ENCODE measurements at regions of chr6 and their contacts with region 1.

Region 1: GRCh38 chr6:12289933-12290820 is at the start of gene EDN1:
- DNase-seq: peak; percentile 86
- H3K4me3 Mint-ChIP-seq: peak within 1 kb of the TSS; percentile 75
- H3K27ac Mint-ChIP-seq: peak within 1 kb of the TSS; percentile 94
- H3K4me1 Mint-ChIP-seq: peaks cover 55% of the 10 kb centered on the region
- H3K27me3 Mint-ChIP-seq: no peaks in the 10 kb centered on the region
- CTCF ChIP-seq: peak; percentile 39
- total RNA-seq, gene EDN1: 1.2 and 2.7 TPM in 2 replicates

Region 2: DNA sequence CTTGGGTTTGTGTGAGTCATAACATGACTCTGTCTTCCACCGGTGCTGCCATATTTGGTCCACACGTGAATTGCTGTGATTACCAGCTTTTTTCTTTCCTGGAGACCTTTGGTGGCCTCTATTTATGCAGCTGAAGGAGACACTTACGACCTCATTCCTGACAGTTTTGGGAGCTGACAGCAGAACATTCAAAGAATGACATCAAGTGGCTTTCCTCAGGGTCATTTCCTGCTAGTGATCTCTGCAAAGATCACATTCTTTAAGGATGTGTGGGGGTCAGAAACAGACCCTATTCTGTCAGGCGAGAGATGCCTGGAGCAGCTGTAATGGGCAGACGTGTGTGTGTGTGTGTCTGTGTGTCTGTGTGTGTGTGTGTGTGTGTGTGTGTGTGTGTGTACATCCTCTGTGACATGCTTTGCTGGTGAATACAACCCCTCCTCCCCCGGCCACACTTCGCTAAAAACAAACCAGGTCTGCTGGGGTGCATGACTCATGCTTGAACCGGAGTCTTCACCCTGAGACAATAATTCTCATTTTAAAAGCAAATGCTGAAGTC is 637.1 kb before region 1 on chr6:
- CTCF ChIA-PET with region 1: interaction called, 26 read pairs
- POLR2A ChIA-PET with region 1: interaction called, 8 read pairs
- intact Hi-C with region 1: loop called (anchors 1 kb)
- DNase-seq: peak; percentile 59
- H3K4me3 Mint-ChIP-seq: no peak overlapping the region
- H3K27ac Mint-ChIP-seq: no peak overlapping the region
- H3K4me1 Mint-ChIP-seq: no peaks in the 10 kb centered on the region
- H3K27me3 Mint-ChIP-seq: no peaks in the 10 kb centered on the region
- CTCF ChIP-seq: no peak

Region 3: GRCh38 chr6:12228447-12229146 is 61.6 kb before region 1 on chr6:
- CTCF ChIA-PET with region 1: interaction called, 42 read pairs
- POLR2A ChIA-PET with region 1: interaction called, 11 read pairs
- intact Hi-C with region 1: no loop called
- DNase-seq: no peak
- H3K4me3 Mint-ChIP-seq: no peak overlapping the region
- H3K27ac Mint-ChIP-seq: no peak overlapping the region
- H3K4me1 Mint-ChIP-seq: no peaks in the 10 kb centered on the region
- H3K27me3 Mint-ChIP-seq: no peaks in the 10 kb centered on the region
- CTCF ChIP-seq: no peak

Region 4: GRCh38 chr6:12313992-12314805 is 24.0 kb after region 1 on chr6:
- CTCF ChIA-PET with region 1: interaction called, 50 read pairs
- POLR2A ChIA-PET with region 1: interaction called, 371 read pairs
- intact Hi-C with region 1: loop called (anchors 2 kb)
- DNase-seq: peak; percentile 95
- H3K4me3 Mint-ChIP-seq: peak overlapping the region; percentile 62
- H3K27ac Mint-ChIP-seq: peak overlapping the region; percentile 88
- H3K4me1 Mint-ChIP-seq: peaks cover 39% of the 10 kb centered on the region
- H3K27me3 Mint-ChIP-seq: no peaks in the 10 kb centered on the region
- CTCF ChIP-seq: no peak

Region 5: DNA sequence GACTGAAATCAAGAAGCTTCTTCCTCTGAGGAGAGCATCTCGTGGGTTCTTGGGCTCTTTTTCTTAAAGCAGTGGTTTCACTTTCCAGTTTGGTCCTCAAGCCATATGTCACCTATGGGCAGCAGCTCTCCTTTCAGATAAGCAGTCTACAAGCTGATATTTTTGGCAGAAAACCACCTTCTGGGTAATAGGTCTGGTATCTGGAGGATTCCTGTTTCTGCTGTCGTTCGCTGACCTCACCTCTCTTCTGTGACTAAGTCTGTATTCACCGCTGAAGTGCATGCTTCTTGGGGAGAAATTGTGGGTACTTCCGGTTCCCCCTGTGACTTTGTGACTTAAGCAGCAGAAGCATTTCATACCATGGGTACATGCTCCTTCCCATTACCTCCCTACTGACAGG is 193.5 kb after region 1 on chr6:
- CTCF ChIA-PET with region 1: interaction called, 14 read pairs
- POLR2A ChIA-PET with region 1: interaction called, 19 read pairs
- intact Hi-C with region 1: no loop called
- DNase-seq: peak; percentile 76
- H3K4me3 Mint-ChIP-seq: peak overlapping the region; percentile 35
- H3K27ac Mint-ChIP-seq: peak overlapping the region; percentile 47
- H3K4me1 Mint-ChIP-seq: peaks cover 25% of the 10 kb centered on the region
- H3K27me3 Mint-ChIP-seq: no peaks in the 10 kb centered on the region
- CTCF ChIP-seq: no peak

Region 6: DNA sequence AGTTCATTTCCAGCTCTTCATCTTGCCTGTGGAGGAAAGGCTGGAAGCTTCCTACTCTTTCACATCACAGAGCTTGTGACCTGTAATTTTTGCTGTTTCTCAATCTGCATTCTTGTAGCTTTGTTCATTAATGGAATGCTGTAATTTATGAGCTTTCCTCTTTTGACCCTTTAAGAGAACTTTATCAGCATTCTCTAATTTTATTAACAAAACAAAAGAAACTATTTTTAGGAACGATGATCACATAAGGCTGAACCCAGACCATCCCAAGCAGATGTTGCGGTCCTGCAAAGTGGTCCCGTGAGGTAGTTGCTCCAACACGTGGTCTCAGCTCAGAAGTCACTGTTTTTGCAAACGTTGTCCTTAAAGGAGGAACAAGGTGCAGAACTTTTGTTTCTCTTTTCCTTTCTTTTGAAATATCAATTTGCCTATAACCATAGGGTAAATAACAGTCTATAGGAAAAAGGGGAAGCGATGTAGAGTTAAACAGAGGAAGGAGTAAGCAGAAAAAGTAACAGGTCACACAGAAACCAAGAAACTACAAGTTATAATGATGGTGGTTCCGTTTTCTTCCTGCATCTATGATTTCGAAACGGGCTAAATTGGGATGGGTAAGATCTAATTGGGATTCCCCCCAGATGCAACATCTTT is 305.1 kb after region 1 on chr6:
- CTCF ChIA-PET with region 1: interaction called, 26 read pairs
- POLR2A ChIA-PET with region 1: interaction called, 116 read pairs
- intact Hi-C with region 1: no loop called
- DNase-seq: no peak
- H3K4me3 Mint-ChIP-seq: no peak overlapping the region
- H3K27ac Mint-ChIP-seq: no peak overlapping the region
- H3K4me1 Mint-ChIP-seq: peaks cover 9% of the 10 kb centered on the region
- H3K27me3 Mint-ChIP-seq: no peaks in the 10 kb centered on the region
- CTCF ChIP-seq: no peak

Measured in MCF 10A (cell line).